GM12878 (cell line): ENCODE measurements at regions of chr13 and their contacts with region 1.

Region 1: DNA sequence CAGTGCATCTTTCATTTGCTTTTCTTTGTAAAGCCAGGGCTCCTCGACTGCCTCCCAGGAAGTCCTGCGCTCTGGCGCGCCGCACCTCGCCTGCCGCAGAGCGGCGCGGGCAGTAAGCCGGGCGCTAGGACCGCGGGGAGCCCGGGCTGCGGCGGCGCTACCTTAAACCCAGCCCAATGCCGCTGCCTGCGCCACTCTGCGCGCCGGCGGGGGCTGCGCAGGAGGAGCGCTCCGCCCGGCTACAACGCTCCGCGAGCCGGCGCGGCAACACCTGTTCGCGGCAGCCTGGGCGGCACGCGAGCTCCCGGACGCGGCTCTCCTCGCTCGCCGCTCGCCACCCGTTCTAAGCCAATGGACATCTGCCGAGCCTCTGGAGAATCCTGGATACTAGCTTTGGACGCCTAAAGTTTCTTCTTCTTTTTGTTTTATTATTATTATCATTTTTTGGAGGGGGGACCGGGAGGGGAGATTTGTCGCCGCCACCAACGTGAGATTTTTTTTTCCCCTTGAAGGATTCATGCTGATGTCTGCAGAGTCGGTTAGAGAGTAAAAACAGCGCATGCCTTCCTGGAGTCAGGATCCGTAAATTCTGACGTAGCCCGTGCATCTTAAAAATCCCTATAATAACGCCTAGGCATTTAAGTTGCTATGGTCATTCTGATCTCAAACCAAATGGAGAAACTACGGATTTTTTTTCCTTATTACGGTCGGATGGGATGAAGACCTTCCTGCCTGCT is at the start of gene FGF9:
- DNase-seq: peak; percentile 7
- ATAC-seq: peak; percentile 92
- H3K4me3 ChIP-seq: peak within 1 kb of the TSS; percentile 75
- H3K27ac ChIP-seq: no peak within 1 kb of the TSS
- H3K4me1 ChIP-seq: peaks cover 23% of the 10 kb centered on the region
- H3K27me3 ChIP-seq: peaks cover 15 to 31% of the 10 kb centered on the region in 2 experiments
- CTCF ChIP-seq: 0 out of 6 replicates have a peak, but pooled peaks of 1 of the 3 experiments have one; percentile 6
- EP300 ChIP-seq: no peak
- POLR2A ChIP-seq: peak; percentile 77
- RAD21 ChIP-seq: no peak
- polyA plus RNA-seq, gene FGF9: 0.92 to 1.0 TPM

Region 2: DNA sequence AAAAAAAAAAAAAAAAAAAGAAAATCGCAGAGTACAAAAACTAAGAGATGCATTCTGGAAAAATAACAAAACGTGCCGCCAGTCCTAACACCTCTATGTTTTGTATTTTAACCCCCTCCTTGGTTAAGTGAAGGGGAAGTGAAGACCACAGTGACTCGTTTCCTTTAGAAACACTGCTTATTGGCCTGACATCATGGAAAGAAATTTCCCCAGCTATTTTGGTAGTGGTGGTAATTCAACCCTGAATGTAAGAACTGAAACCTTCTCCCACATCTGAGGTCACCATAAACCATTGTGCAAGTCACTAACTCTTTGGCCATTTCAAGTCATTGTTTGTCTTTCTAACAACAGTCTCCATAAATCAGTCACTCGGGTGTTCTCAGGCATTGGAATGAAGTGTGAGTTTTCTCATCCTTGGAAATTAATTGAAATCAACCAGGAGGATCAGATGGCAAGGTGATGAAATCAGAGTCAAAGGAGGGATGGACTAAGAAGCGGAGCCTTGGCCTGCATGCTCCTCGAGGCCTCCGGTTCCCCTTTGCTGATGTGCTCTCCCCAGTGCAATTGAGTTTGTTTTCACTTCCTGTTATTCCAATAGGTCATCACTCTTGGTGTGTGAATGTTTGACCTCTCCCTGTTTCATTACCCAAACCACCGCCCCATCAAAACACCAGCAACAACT is 443.7 kb after region 1 on chr13:
- CTCF ChIA-PET with region 1: no interaction called
- POLR2A ChIA-PET with region 1: no interaction called
- RAD21 ChIA-PET with region 1: no interaction called
- SMC1A ChIA-PET with region 1: no interaction called
- in situ Hi-C with region 1: no loop called
- intact Hi-C with region 1: loop called (anchors 5 kb)
- DNase-seq: peak; percentile 99
- ATAC-seq: peak; percentile 92
- H3K4me3 ChIP-seq: no peak overlapping the region
- H3K27ac ChIP-seq: peak overlapping the region; percentile 78
- H3K4me1 ChIP-seq: peaks cover 18% of the 10 kb centered on the region
- H3K27me3 ChIP-seq: no peaks in the 10 kb centered on the region
- CTCF ChIP-seq: no peak
- EP300 ChIP-seq: peak; percentile 99 to 100
- POLR2A ChIP-seq: peak; percentile 58; the same call in 1 of the 2 replicates
- RAD21 ChIP-seq: peak; percentile 17; the same call in 1 of the 2 replicates